Natural killer cell (primary cell): ENCODE measurements at regions of chr2 and their contacts with region 1.

Region 1: DNA sequence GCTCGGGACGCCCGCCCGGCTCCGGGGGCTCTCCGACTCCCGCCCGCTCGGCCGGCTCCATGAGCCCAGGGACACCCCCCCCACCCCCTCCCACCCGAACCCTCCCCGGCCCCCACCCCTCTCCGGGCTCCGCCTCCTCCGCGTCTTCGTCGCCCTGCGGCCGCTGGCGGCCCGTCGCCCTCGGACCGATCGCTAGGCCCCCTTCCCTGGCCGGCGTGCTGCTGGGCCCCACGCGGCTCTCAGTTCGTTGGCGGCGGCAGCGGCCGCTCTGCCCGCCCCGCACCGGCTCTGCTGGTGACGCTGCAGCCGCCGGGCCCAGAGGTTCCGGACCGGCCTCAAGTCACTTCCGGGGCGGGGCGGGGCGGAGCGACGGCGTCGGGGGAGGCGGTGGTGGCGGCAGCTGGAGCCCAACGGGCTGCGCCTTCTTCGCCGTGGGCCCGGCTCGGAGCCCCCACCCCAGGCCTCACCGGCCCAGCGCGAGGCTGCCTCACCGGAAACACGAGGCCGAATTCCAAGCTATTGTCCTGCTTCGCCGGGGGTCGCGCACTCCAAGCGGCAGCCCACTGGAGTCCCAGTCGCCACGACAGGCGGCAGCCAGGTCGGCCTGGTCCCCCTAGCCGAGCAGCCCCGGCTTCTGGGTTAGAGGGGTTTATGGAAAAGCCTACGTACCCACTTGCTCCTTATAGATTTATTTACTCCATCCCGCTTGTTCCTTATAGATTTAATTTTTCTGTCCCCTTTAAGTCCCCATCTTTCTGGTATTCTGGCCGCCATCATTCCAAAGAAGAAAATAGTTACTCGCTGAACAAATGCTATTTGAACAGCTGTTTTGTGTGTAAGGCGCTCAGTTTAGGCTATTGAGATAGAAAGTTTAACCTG is at the start of gene PSME4:
- DNase-seq: peak; percentile 91 to 94
- ATAC-seq: peak; percentile 89 to 97 (median 92)
- H3K4me3 ChIP-seq: peak within 1 kb of the TSS; percentile 92
- H3K4me3 Mint-ChIP-seq: peak within 1 kb of the TSS; percentile 96
- H3K27ac ChIP-seq: peak within 1 kb of the TSS; percentile 89
- H3K27ac Mint-ChIP-seq: peak within 1 kb of the TSS; percentile 94
- H3K4me1 ChIP-seq: peaks cover 27% of the 10 kb centered on the region
- H3K4me1 Mint-ChIP-seq: peaks cover 50 to 54% of the 10 kb centered on the region in 2 donors
- H3K27me3 ChIP-seq: no peaks in the 10 kb centered on the region
- H3K27me3 Mint-ChIP-seq: no peaks in the 10 kb centered on the region
- CTCF ChIP-seq: no peak
- total RNA-seq, gene PSME4: 140 to 149 (median 141) TPM

Region 2: DNA sequence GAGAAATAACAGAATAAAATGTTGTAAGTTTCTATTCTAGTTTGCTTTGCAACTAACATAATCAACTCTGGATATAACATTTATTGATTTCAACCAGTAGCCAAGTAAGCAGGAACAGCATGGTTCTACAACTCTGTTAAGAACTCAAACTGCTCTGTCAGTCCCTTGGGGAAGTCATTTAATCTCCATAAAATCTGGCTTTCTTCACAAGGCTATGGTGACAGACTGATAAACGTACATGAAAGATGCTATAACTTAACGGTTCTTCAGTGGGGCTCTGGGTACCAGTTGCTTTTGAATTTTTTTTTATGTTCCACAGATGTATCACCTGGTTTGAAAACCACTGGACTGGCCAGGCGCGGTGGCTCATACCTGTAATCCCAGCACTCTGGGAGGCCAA is 10.5 kb before region 1 on chr2:
- intact Hi-C with region 1: no loop called
- DNase-seq: no peak
- ATAC-seq: peak in 1 of 3 donors; percentile 23
- H3K4me3 ChIP-seq: no peak overlapping the region
- H3K4me3 Mint-ChIP-seq: no peak overlapping the region
- H3K27ac ChIP-seq: no peak overlapping the region
- H3K27ac Mint-ChIP-seq: peak overlapping the region in 1 of 2 donors; percentile 49
- H3K4me1 ChIP-seq: peaks cover 13% of the 10 kb centered on the region
- H3K4me1 Mint-ChIP-seq: peaks cover 65 to 66% of the 10 kb centered on the region in 2 donors
- H3K27me3 ChIP-seq: no peaks in the 10 kb centered on the region
- H3K27me3 Mint-ChIP-seq: no peaks in the 10 kb centered on the region
- CTCF ChIP-seq: no peak

Region 3: GRCh38 chr2:53987336-53987921 is 16.5 kb after region 1 on chr2:
- intact Hi-C with region 1: no loop called
- DNase-seq: no peak
- ATAC-seq: no peak
- H3K4me3 ChIP-seq: no peak overlapping the region
- H3K4me3 Mint-ChIP-seq: no peak overlapping the region
- H3K27ac ChIP-seq: no peak overlapping the region
- H3K27ac Mint-ChIP-seq: peak overlapping the region; percentile 56 to 82
- H3K4me1 ChIP-seq: peaks cover 3% of the 10 kb centered on the region
- H3K4me1 Mint-ChIP-seq: peaks cover 13 to 28% of the 10 kb centered on the region in 2 donors
- H3K27me3 ChIP-seq: no peaks in the 10 kb centered on the region
- H3K27me3 Mint-ChIP-seq: no peaks in the 10 kb centered on the region
- CTCF ChIP-seq: no peak

Region 4: GRCh38 chr2:54041135-54041534 is 70.2 kb after region 1 on chr2:
- intact Hi-C with region 1: loop called (anchors 1 kb)
- DNase-seq: peak; percentile 34
- ATAC-seq: peak; percentile 71 to 91 (median 88)
- H3K4me3 ChIP-seq: no peak overlapping the region
- H3K4me3 Mint-ChIP-seq: no peak overlapping the region
- H3K27ac ChIP-seq: peak overlapping the region; percentile 12
- H3K27ac Mint-ChIP-seq: no peak overlapping the region
- H3K4me1 ChIP-seq: peaks cover 11% of the 10 kb centered on the region
- H3K4me1 Mint-ChIP-seq: peaks cover 0 to 19% of the 10 kb centered on the region in 2 donors
- H3K27me3 ChIP-seq: no peaks in the 10 kb centered on the region
- H3K27me3 Mint-ChIP-seq: no peaks in the 10 kb centered on the region
- CTCF ChIP-seq: no peak